ENCODE measurements at regions of chr4 and their contacts with region 1.

Region 1: GRCh38 chr4:168923526-168924194 is 86.4 kb downstream of the CBR4 start:
- DNase-seq: peak; percentile 76
- H3K4me3 ChIP-seq: no peak overlapping the region
- H3K27ac ChIP-seq: no peak overlapping the region
- H3K27me3 ChIP-seq: no peaks in the 10 kb centered on the region
- CTCF ChIP-seq: peak; percentile 87

Region 2: GRCh38 chr4:168514249-168514852 is 409.3 kb before region 1 on chr4:
- CTCF ChIA-PET with region 1: interaction called, 21 read pairs
- POLR2A ChIA-PET with region 1: no interaction called
- DNase-seq: no peak
- H3K4me3 ChIP-seq: no peak overlapping the region
- H3K27ac ChIP-seq: no peak overlapping the region
- H3K27me3 ChIP-seq: no peaks in the 10 kb centered on the region
- CTCF ChIP-seq: peak; percentile 42

Region 3: DNA sequence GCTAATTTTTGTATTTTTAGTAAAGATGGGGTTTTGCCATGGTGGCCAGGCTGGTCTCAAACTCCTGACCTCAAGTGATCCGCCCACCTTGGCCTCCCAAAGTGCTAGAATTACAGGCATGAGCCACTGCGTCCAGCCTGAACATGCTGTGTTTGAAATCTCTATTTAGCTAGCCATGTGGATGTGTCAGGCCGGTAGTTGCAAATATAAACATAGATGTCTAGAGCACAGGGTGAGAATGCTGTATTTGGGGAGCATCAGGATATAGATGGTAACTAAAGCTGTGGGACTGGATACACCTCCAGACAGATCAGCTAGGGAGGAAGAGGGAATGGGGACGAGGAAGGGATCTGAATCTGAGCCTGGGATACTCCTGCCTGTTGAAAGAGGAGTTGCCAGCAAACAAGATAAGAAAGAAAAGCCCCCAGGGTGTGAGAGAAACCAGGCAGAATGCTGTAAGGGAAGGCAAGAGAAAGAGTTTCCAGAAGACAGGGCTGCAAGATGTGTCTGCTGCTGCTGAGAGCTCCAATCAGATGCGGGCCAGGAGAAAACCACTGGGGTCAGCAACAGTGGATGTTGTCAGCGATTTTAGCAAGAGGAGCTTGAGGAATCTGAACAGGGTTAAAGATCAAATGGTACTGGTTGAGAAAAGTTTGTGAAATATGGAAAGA is 249.4 kb before region 1 on chr4:
- CTCF ChIA-PET with region 1: interaction called, 10 read pairs
- POLR2A ChIA-PET with region 1: no interaction called
- DNase-seq: no peak
- H3K4me3 ChIP-seq: no peak overlapping the region
- H3K27ac ChIP-seq: peak overlapping the region; percentile 47
- H3K27me3 ChIP-seq: no peaks in the 10 kb centered on the region
- CTCF ChIP-seq: no peak

Region 4: DNA sequence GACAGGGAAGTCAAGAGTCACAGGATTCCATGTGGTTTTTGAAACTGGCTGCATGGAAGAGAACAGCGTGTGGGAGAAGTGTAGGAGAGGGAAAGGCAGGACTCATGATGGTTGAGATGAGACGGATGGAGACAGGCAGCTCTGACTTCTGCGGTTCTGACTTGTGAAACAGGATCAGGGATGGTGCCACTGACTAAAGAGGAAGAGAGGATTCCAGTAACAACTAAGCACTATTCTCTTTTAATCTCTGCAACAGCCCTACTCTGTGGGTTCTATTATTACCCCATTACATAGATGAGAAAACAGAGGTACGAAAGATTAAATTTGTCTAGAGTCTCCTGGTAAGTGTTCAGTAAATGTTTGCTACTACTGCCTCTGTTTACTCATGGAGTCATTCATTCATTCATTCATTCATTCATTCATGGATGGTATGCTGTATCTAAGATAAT is 69.9 kb before region 1 on chr4:
- CTCF ChIA-PET with region 1: interaction called, 10 read pairs
- POLR2A ChIA-PET with region 1: no interaction called
- DNase-seq: no peak
- H3K4me3 ChIP-seq: no peak overlapping the region
- H3K27ac ChIP-seq: peak overlapping the region; percentile 48
- H3K27me3 ChIP-seq: no peaks in the 10 kb centered on the region
- CTCF ChIP-seq: no peak

Region 5: GRCh38 chr4:169010125-169011023 is 86.7 kb after region 1 on chr4 and contains the start of gene CBR4:
- CTCF ChIA-PET with region 1: interaction called, 17 read pairs
- POLR2A ChIA-PET with region 1: no interaction called
- DNase-seq: peak; percentile 96
- H3K4me3 ChIP-seq: peak within 1 kb of the TSS; percentile 83
- H3K27ac ChIP-seq: peak within 1 kb of the TSS; percentile 92
- H3K27me3 ChIP-seq: no peaks in the 10 kb centered on the region
- CTCF ChIP-seq: peak; percentile 43
- polyA plus RNA-seq, gene CBR4: 4.2 and 4.5 TPM in 2 replicates

Region 6: DNA sequence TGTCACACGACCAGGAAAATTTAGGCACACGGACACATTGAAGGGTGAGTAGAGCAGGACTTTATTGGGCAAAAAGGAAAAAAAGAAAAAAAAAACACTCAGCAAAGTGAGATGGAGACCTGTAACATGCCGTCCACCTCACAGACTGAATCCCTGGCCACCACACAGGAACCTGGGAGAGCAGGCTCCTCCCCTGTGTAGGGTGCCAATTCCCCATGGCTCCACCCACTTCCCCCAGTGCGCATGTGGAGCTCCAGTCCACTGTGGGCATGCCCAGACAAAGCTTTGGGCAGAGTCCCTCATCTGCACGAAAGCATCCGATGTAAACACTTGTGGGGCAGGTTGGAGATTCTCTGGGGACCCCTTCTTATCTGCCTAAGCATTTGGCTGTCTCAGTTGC is 110.0 kb after region 1 on chr4:
- CTCF ChIA-PET with region 1: no interaction called
- POLR2A ChIA-PET with region 1: no interaction called
- DNase-seq: no peak
- H3K4me3 ChIP-seq: no peak overlapping the region
- H3K27ac ChIP-seq: no peak overlapping the region
- H3K27me3 ChIP-seq: no peaks in the 10 kb centered on the region
- CTCF ChIP-seq: no peak

Region 7: DNA sequence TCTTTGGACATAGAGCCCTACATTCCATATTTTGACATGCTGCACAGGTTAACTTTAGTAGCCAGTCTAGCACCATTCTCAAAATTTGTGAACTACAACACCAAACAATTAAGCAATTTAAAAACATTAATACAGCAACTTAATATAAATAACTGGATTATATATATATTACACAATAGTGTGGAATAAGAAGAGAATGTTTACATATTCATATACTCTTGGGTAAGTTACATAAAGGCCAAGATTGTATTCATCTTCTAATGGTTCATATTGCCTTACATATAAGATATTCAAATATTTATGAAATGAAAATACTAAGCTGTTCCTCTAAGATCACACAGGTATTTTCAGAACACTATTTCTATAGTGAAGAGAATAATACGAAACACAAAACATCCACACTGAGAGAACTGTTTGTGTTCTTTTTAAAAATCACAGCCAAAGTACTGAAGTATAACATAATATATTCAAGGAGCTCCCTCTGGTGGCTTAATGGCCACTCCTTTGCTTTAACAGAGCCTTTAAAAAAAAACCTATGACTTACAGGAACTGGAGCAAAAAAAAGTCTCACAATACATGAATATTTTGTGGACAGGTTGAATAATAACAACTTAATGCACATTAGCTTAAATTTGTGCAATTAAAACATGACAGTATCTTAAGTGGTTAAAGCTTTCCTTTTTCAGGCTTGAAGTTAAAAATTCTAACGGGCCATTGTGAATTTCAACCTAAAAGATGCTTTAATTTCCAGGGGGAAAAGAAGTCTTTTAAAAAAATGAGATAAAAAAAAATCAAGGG is 642.6 kb after region 1 on chr4:
- CTCF ChIA-PET with region 1: interaction called, 34 read pairs
- POLR2A ChIA-PET with region 1: no interaction called
- DNase-seq: peak; percentile 18
- H3K4me3 ChIP-seq: no peak overlapping the region
- H3K27ac ChIP-seq: no peak overlapping the region
- H3K27me3 ChIP-seq: no peaks in the 10 kb centered on the region
- CTCF ChIP-seq: peak; percentile 75

Measured in AG04450 (cell line).